WTC11 (cell line): ENCODE measurements at regions of chr1 and their contacts with region 1.

Region 1: GRCh38 chr1:235734335-235734734 is 84.8 kb upstream of the GNG4 start:
- DNase-seq: no peak
- ATAC-seq: no peak
- H3K4me3 Mint-ChIP-seq: no peak overlapping the region
- H3K27ac Mint-ChIP-seq: no peak overlapping the region
- H3K4me1 Mint-ChIP-seq: no peaks in the 10 kb centered on the region
- H3K27me3 Mint-ChIP-seq: no peaks in the 10 kb centered on the region
- CTCF ChIP-seq: no peak

Region 2: DNA sequence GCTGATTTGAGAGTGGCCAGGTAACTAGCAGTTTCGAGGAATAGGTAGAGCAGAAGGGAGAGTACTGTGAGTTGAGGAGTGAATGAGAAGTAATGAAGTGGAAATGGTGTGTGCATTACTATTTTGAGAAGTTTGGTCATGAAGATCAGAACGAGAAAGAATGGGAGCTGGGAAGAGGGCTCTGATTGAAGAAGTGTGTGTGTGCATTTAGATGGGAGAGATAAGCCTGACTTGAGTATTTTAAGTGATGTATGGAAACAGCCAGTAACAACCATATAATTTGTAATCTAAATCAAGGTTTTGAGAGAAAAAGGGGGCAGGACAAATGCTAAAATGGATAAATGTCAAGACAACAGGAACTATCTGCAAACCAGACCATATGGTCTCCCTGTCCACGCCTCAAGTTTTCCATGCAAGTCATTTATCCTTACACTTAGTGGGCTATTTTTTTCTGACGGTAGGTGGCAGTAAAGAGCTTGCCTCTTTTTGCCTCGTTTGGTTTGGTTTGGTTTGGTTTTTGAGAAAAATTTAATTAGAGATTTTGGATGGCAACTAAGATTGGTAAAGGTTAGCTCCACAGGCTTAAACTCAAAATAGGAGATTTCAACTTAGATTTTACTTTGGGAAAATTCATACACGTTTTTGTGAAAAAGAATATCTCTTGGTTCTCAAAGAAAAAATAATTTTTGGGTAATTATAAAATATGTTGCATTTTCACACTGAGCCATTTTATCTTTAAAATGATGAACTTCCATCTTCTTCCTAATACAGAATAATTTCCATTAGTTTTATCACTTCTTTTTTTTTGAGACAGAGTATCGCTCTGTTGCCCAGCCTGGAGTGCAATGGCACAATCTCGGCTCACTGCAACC is 220.6 kb before region 1 on chr1:
- CTCF ChIA-PET with region 1: interaction called, 11 read pairs
- POLR2A ChIA-PET with region 1: no interaction called
- DNase-seq: no peak
- ATAC-seq: peak; percentile 46
- H3K4me3 Mint-ChIP-seq: no peak overlapping the region
- H3K27ac Mint-ChIP-seq: no peak overlapping the region
- H3K4me1 Mint-ChIP-seq: no peaks in the 10 kb centered on the region
- H3K27me3 Mint-ChIP-seq: no peaks in the 10 kb centered on the region
- CTCF ChIP-seq: peak; percentile 69

Region 3: DNA sequence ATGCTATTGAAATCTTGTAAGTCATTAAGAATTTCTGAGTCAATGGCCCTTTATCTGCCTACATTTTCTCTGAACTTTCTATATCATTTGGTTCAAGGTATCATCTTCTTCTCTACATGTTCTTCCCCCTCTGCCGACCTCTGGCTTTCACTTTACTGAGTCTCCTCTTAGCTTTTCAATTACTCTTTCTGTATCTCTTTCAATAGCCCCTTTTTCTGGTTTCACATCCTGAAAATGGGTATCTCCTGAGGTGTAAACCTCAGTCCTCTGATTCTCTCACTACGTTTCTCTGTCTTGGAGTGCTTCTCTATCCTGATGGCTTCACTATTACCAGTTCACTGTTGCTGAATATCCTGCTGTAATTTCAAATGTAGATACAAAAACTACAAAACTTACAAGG is 33.5 kb after region 1 on chr1:
- CTCF ChIA-PET with region 1: no interaction called
- POLR2A ChIA-PET with region 1: no interaction called
- DNase-seq: no peak
- ATAC-seq: no peak
- H3K4me3 Mint-ChIP-seq: no peak overlapping the region
- H3K27ac Mint-ChIP-seq: no peak overlapping the region
- H3K4me1 Mint-ChIP-seq: no peaks in the 10 kb centered on the region
- H3K27me3 Mint-ChIP-seq: no peaks in the 10 kb centered on the region
- CTCF ChIP-seq: no peak